ENCODE measurements at regions of chr3 and their contacts with region 1.

Region 1: DNA sequence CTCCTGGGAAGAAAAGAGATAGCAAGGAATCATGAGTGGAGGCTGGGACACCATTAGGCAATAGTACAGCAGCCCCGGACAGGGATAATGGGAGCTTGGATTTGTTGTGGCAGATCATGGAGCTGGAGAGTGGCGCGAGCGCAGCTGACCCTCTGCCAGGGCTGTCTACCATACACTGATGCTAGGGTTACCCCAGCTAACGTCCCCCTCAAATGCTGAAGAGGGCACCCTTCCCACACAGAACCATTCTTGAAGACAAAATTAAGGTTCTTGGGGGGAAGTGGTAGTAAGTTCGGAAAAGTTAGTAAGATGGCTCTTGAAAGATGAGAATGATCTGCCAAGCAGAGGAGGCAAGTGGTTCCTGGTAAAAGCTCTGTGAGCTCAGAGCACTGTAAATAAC is 61.1 kb downstream of the ST3GAL6 start:
- DNase-seq: no peak
- ATAC-seq: no peak
- H3K4me3 ChIP-seq: no peak overlapping the region
- H3K27ac ChIP-seq: no peak overlapping the region
- H3K4me1 ChIP-seq: no peaks in the 10 kb centered on the region
- H3K27me3 ChIP-seq: no peaks in the 10 kb centered on the region

Region 2: DNA sequence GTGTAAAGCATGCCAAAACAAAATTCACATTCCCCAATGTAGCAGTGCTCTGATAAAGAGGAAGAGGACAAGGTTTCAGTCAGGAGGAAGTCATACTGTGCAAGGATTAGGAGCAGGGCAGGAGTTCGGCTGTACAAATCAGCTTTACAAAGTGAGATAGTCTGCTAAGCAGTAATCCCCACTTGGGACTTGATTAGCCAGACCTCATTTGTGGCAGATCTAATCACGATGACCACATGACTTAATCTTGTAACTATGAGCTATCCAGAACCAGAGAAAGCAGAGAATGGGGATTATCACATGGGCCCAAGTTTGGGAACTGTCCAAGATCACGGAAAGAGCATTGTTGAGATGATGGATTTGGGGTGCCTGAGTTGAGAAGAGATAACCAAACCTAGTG is 69.5 kb after region 1 on chr3:
- intact Hi-C with region 1: loop called in 1 of 2 experiments (anchors 10 kb)
- DNase-seq: no peak
- ATAC-seq: peak; percentile 51
- H3K4me3 ChIP-seq: no peak overlapping the region
- H3K27ac ChIP-seq: no peak overlapping the region
- H3K4me1 ChIP-seq: peaks cover 6 to 17% of the 10 kb centered on the region in 2 donors
- H3K27me3 ChIP-seq: no peaks in the 10 kb centered on the region

Measured in aorta (tissue), 5 donors.